Gastrocnemius medialis (tissue), 4 donors: ENCODE measurements at regions of chr15 and their contacts with region 1.

Region 1: DNA sequence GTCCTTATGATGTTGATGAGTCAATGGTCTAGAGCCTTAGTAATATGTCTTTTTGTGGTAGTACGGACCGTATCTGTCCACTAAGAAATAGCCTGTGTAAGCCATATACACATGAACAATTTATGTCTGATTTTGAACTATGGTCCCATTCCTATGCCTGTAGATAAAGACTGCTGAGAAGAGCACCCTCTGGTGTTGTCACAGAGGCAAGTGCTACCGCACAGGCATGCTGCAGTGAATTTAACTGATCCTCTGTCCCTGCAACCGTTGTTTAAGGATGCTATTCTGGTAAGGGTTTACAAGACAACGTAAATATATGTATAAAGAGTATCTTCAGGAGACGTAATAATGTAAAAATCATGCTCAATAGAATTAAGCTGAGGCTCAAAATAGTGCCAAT is 170.7 kb downstream of the UBE3A start:
- DNase-seq: no peak
- ATAC-seq: no peak
- H3K4me3 ChIP-seq: no peak overlapping the region
- H3K27ac ChIP-seq: no peak overlapping the region
- H3K4me1 ChIP-seq: no peaks in the 10 kb centered on the region
- H3K27me3 ChIP-seq: no peaks in the 10 kb centered on the region
- CTCF ChIP-seq: no peak
- POLR2A ChIP-seq: no peak

Region 2: GRCh38 chr15:25087137-25087536 is 181.0 kb before region 1 on chr15:
- in situ Hi-C with region 1: no loop called
- intact Hi-C with region 1: no loop called
- DNase-seq: no peak
- ATAC-seq: no peak
- H3K4me3 ChIP-seq: no peak overlapping the region
- H3K27ac ChIP-seq: no peak overlapping the region
- H3K4me1 ChIP-seq: no peaks in the 10 kb centered on the region
- H3K27me3 ChIP-seq: no peaks in the 10 kb centered on the region
- CTCF ChIP-seq: no peak
- POLR2A ChIP-seq: no peak

Region 3: GRCh38 chr15:25171856-25172687 is 96.1 kb before region 1 on chr15:
- in situ Hi-C with region 1: loop called in 1 of 4 experiments (anchors 25 kb)
- intact Hi-C with region 1: no loop called
- DNase-seq: no peak
- ATAC-seq: no peak
- H3K4me3 ChIP-seq: no peak overlapping the region
- H3K27ac ChIP-seq: no peak overlapping the region
- H3K4me1 ChIP-seq: no peaks in the 10 kb centered on the region
- H3K27me3 ChIP-seq: no peaks in the 10 kb centered on the region
- CTCF ChIP-seq: no peak
- POLR2A ChIP-seq: no peak